Naive thymus-derived CD4-positive, alpha-beta T cell (primary cell): ENCODE measurements at regions of chr2 and their contacts with region 1.

Region 1: DNA sequence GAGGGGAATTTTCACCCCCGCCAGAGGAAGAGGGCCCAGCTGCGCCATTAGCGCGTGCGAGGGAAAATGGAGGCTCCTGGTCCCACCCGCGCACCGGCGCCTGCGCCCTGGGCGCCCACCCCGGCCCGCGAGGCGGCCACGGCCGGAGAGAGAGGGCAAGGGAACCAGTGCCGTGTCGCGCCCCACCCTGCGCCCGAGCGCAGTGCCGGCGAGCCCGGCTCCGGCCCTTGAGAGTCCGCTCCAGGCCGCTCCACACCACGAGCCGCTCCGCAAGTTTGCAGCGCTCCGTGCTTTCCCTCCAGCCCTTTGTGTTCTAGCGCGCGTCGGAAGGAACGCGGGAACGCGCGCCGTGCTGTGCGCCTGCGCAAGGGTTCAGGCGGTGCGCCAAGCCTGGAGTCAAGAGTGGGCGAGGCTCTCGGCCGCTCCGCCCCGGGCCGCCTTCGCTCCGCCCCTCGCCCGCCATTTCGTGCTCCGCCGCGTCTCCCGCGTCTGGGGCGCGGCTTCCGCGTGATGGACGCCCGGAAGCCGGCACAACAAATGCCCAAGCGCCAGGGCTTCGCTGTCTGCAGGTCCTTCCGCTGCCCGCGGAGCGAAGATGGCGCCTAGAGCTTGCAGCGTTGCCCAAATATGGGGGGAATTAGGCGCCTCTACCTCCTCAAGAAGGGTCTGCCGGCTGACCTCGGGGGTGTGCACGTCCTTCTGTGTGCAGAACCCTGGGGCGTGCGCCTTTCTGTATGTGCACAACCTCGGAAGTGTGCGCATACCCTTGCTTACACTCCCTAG is 46.1 kb upstream of the PTMA start:
- DNase-seq: peak; percentile 93 to 100 (median 99)
- ATAC-seq: peak; percentile 93
- H3K4me3 ChIP-seq: peak overlapping the region; percentile 73
- H3K4me3 Mint-ChIP-seq: peak overlapping the region; percentile 70 to 87 (median 84)
- H3K27ac ChIP-seq: peak overlapping the region; percentile 88
- H3K27ac Mint-ChIP-seq: peak overlapping the region; percentile 89 to 99 (median 96)
- H3K4me1 ChIP-seq: peaks cover 8 to 14% of the 10 kb centered on the region in 2 donors
- H3K4me1 Mint-ChIP-seq: peaks cover 8 to 34% (median 23%) of the 10 kb centered on the region in 7 donors
- H3K27me3 ChIP-seq: no peaks in the 10 kb centered on the region
- H3K27me3 Mint-ChIP-seq: no peaks in the 10 kb centered on the region

Region 2: DNA sequence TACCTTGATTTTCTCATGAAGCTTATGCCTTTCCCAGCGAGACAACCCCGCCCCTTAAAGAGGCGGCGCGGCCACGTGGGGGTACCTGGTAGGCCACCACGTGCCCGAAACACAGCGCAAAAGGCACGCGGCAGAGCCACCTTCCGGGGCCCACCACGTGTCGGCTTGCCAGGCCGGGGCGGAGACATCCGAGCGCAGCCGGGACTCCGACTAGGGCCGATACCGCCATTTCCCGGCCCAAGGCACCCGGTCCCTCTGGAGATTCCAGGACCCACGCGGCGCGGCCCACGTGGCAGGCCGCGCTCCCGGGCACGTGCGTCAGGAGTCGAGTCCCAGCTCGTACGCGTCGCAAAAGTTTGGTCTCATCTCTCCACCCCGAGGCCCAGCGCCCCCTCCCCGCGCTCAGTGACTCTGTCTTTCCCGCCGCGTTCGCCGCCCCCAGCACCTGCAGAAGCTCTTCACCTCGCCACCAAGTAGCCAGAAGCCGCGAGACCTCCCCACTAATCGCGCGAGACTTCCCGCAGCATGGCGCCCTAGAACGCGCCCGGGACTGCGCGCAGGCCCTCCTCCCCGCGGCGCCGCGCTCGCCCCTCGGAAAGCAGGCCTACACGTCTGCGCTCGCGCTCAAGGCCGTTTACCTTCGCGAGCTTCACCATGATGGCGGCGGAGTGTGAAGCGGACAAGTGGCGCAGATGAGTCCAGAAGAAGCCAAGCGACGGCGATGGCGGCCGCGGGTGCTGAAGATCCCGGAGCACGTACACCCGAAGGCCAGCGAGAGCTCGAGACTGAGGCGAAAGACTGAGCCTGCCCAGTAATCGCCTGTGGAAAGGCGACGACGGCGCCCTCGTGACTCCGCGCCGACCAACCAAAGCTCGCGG is 198.3 kb before region 1 on chr2 and contains the start of gene NCL:
- CTCF ChIA-PET with region 1: no interaction called
- POLR2A ChIA-PET with region 1: no interaction called
- intact Hi-C with region 1: loop called (anchors 1 kb)
- DNase-seq: peak; percentile 75 to 96 (median 91)
- ATAC-seq: peak; percentile 73
- H3K4me3 ChIP-seq: peak within 1 kb of the TSS; percentile 65
- H3K4me3 Mint-ChIP-seq: peak within 1 kb of the TSS; percentile 90 to 99 (median 95)
- H3K27ac ChIP-seq: peak within 1 kb of the TSS; percentile 96
- H3K27ac Mint-ChIP-seq: peak within 1 kb of the TSS; percentile 96 to 100 (median 100)
- H3K4me1 ChIP-seq: peaks cover 26 to 28% of the 10 kb centered on the region in 2 donors
- H3K4me1 Mint-ChIP-seq: peaks cover 39 to 65% (median 44%) of the 10 kb centered on the region in 7 donors
- H3K27me3 ChIP-seq: no peaks in the 10 kb centered on the region
- H3K27me3 Mint-ChIP-seq: no peaks in the 10 kb centered on the region
- total RNA-seq, gene NCL: 411 to 647 (median 426) TPM

Region 3: GRCh38 chr2:231568785-231569435 is 93.3 kb before region 1 on chr2:
- CTCF ChIA-PET with region 1: no interaction called
- POLR2A ChIA-PET with region 1: no interaction called
- intact Hi-C with region 1: no loop called
- DNase-seq: no peak
- ATAC-seq: no peak
- H3K4me3 ChIP-seq: no peak overlapping the region
- H3K4me3 Mint-ChIP-seq: no peak overlapping the region
- H3K27ac ChIP-seq: no peak overlapping the region
- H3K27ac Mint-ChIP-seq: no peak overlapping the region
- H3K4me1 ChIP-seq: no peaks in the 10 kb centered on the region
- H3K4me1 Mint-ChIP-seq: peaks cover 0 to 8% (median 0%) of the 10 kb centered on the region in 7 donors
- H3K27me3 ChIP-seq: no peaks in the 10 kb centered on the region
- H3K27me3 Mint-ChIP-seq: peaks cover 0 to 12% (median 0%) of the 10 kb centered on the region in 5 donors

Region 4: GRCh38 chr2:231604685-231605606 is 57.3 kb before region 1 on chr2:
- CTCF ChIA-PET with region 1: no interaction called
- POLR2A ChIA-PET with region 1: no interaction called
- intact Hi-C with region 1: loop called in 1 of 2 experiments (anchors 1 kb)
- DNase-seq: peak; percentile 80 to 97 (median 88)
- ATAC-seq: peak; percentile 89
- H3K4me3 ChIP-seq: peak overlapping the region; percentile 36
- H3K4me3 Mint-ChIP-seq: peak overlapping the region; percentile 58 to 77 (median 72)
- H3K27ac ChIP-seq: peak overlapping the region; percentile 89
- H3K27ac Mint-ChIP-seq: peak overlapping the region in 8 of 9 donors; percentile 50 to 93 (median 90)
- H3K4me1 ChIP-seq: peaks cover 0 to 9% of the 10 kb centered on the region in 2 donors
- H3K4me1 Mint-ChIP-seq: peaks cover 0 to 14% (median 4%) of the 10 kb centered on the region in 7 donors
- H3K27me3 ChIP-seq: no peaks in the 10 kb centered on the region
- H3K27me3 Mint-ChIP-seq: peaks cover 0 to 9% (median 0%) of the 10 kb centered on the region in 5 donors

Region 5: GRCh38 chr2:231642631-231643494 is 19.4 kb before region 1 on chr2:
- CTCF ChIA-PET with region 1: no interaction called
- POLR2A ChIA-PET with region 1: interaction called, 3 read pairs
- intact Hi-C with region 1: loop called in 1 of 2 experiments (anchors 1 kb)
- DNase-seq: peak in 4 of 9 donors; percentile 16 to 78 (median 44)
- ATAC-seq: peak; percentile 79
- H3K4me3 ChIP-seq: peak overlapping the region; percentile 25
- H3K4me3 Mint-ChIP-seq: peak overlapping the region; percentile 33 to 84 (median 74)
- H3K27ac ChIP-seq: no peak overlapping the region
- H3K27ac Mint-ChIP-seq: peak overlapping the region in 8 of 9 donors; percentile 48 to 94 (median 64)
- H3K4me1 ChIP-seq: peaks cover 0 to 8% of the 10 kb centered on the region in 2 donors
- H3K4me1 Mint-ChIP-seq: peaks cover 8 to 39% (median 11%) of the 10 kb centered on the region in 7 donors
- H3K27me3 ChIP-seq: no peaks in the 10 kb centered on the region
- H3K27me3 Mint-ChIP-seq: no peaks in the 10 kb centered on the region

Region 6: DNA sequence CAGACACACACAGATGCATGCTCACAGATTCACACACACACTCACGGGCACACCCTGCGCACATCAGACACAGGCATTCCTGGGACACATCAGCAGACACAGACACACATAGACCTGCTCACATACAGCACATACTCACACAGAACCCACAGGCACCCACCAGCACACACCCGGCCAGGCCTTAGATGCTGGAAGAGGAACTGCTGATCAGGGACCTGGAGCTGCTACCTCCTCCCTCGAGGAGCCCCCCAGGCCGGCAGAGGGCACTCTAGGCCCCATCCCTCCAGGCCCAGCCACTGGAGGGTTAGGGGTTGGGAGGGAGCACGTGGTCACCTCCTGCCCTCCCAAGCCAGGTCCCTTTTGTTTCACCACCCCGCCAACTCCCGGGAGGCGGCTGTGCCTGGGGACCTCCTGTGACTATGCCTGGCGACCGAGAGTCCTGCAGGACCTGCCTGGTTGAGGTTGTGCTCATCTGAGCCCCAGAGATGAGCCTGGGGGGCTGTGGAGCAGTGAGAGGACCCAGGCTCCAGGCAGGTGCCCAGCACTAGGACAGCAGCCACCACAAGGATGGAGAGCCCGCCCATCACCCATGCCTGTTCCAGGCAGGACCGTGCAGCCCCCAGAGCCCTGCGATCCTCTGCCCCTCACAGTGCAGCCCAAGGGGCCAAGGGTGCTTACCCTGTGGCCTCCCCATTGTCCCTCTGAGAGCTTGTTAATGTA is 25.1 kb after region 1 on chr2:
- CTCF ChIA-PET with region 1: no interaction called
- POLR2A ChIA-PET with region 1: no interaction called
- intact Hi-C with region 1: loop called in 1 of 2 experiments (anchors 1 kb)
- DNase-seq: peak; percentile 50 to 70 (median 64)
- ATAC-seq: peak; percentile 91
- H3K4me3 ChIP-seq: no peak overlapping the region
- H3K4me3 Mint-ChIP-seq: no peak overlapping the region
- H3K27ac ChIP-seq: no peak overlapping the region
- H3K27ac Mint-ChIP-seq: peak overlapping the region in 1 of 9 donors; percentile 8
- H3K4me1 ChIP-seq: no peaks in the 10 kb centered on the region
- H3K4me1 Mint-ChIP-seq: peaks cover 0 to 11% (median 8%) of the 10 kb centered on the region in 7 donors
- H3K27me3 ChIP-seq: no peaks in the 10 kb centered on the region
- H3K27me3 Mint-ChIP-seq: peaks cover 5 to 14% (median 8%) of the 10 kb centered on the region in 5 donors

Region 7: DNA sequence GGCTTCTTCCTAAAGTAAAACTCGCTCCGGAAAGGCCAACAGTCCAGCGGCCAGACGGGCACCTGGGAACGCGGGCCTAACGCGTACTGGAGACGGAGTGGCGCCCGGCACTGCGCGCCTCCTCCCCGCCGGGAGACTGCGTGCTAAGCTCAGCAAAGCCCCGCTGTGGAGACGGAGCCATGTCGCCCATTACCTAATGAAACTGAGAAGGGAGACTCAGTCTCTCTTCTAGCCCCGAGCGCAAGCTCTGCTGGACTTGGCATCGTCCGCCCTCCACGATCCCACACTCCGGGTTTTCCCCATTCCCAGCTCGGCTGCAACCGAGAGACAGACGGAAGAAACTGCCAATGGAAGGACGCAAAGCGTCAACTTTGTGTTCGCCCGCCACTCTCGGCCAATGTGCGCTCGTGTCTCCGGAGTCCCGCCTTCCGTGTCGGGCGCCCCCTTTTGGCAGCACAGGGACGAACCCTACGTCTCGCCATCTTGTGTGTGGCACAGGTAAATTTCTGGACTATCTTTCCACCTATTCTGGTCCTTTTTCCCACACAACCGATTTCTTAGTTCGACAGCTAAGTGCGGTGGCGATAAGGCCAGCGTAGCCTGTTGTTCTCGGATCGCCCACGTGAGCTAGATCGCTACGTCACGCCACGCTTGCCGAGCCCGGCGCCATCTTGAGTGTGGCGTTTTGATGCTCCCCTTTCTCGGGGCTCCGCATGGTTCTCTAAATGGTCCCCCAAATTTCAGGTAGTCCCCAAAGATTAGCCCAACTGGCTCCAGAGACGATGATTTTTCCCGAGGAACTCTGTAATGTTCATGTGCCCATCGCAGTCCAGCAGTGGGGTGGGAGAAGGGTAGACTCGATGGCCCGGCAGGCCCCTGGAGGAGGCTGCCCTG is 44.8 kb after region 1 on chr2:
- CTCF ChIA-PET with region 1: interaction called, 8 read pairs
- POLR2A ChIA-PET with region 1: interaction called, 241 read pairs
- intact Hi-C with region 1: loop called (anchors 1 kb)
- DNase-seq: peak; percentile 96 to 99 (median 97)
- ATAC-seq: peak; percentile 62
- H3K4me3 ChIP-seq: peak overlapping the region; percentile 78
- H3K4me3 Mint-ChIP-seq: peak overlapping the region; percentile 95 to 99 (median 97)
- H3K27ac ChIP-seq: peak overlapping the region; percentile 100
- H3K27ac Mint-ChIP-seq: peak overlapping the region; percentile 100
- H3K4me1 ChIP-seq: peaks cover 19 to 21% of the 10 kb centered on the region in 2 donors
- H3K4me1 Mint-ChIP-seq: peaks cover 11 to 34% (median 23%) of the 10 kb centered on the region in 7 donors
- H3K27me3 ChIP-seq: no peaks in the 10 kb centered on the region
- H3K27me3 Mint-ChIP-seq: peaks cover 0 to 6% (median 0%) of the 10 kb centered on the region in 5 donors

Region 8: DNA sequence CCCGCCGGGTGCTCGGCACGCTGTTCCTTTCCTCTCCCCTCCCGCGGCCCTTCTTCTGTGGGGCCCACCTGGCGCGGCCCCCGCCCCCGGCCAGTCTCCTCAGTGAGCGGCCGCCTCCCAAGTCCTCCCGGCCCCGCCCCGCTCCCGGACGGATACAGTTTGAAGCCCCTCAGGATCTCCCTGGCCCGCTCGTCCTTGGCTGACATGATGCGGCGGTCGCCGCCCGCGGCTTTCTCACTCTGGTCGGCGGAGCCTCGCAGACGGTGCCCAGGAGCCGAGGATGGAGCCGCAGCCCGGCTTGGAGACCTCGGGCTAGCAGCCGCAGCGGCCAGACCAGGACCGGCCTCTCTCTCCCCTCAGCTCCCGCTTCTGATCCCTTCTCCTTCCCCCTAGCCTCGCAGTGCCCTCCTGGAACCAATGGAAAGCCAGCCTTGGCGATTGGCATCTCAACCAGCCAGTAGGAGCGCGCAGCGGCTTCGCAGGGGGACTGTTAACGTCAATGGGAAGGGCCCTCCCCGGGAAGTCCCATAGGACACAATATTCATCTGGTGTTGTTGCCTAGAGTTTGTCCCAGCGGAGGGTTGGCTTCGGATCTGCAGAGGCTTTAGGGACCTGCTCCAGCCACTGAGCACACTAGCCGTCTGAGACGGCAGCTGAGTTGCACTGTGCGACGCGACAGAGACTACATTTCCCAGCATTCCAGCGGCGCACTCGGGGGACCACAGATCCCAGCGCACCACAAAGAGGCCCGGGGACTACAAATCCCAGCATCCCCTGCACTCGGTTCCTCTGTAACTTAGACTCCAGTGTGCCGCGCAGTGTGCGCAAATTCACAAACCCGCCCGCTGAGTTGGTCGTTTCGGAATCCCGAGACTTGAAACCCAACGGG is 118.9 kb after region 1 on chr2 and contains the start of gene PDE6D:
- CTCF ChIA-PET with region 1: no interaction called
- POLR2A ChIA-PET with region 1: interaction called, 3 read pairs
- intact Hi-C with region 1: loop called (anchors 1 kb)
- DNase-seq: peak; percentile 90 to 98 (median 94)
- ATAC-seq: peak; percentile 94
- H3K4me3 ChIP-seq: peak within 1 kb of the TSS; percentile 100
- H3K4me3 Mint-ChIP-seq: peak within 1 kb of the TSS; percentile 85 to 99 (median 98)
- H3K27ac ChIP-seq: peak within 1 kb of the TSS; percentile 82
- H3K27ac Mint-ChIP-seq: peak within 1 kb of the TSS; percentile 90 to 98 (median 94)
- H3K4me1 ChIP-seq: peaks cover 26 to 30% of the 10 kb centered on the region in 2 donors
- H3K4me1 Mint-ChIP-seq: peaks cover 45 to 76% (median 57%) of the 10 kb centered on the region in 7 donors
- H3K27me3 ChIP-seq: no peaks in the 10 kb centered on the region
- H3K27me3 Mint-ChIP-seq: peaks cover 0 to 5% (median 0%) of the 10 kb centered on the region in 5 donors
- total RNA-seq, gene PDE6D: 14.3 to 35.7 (median 25.2) TPM